ENCODE measurements at regions of chr3 and their contacts with region 1.

Region 1: DNA sequence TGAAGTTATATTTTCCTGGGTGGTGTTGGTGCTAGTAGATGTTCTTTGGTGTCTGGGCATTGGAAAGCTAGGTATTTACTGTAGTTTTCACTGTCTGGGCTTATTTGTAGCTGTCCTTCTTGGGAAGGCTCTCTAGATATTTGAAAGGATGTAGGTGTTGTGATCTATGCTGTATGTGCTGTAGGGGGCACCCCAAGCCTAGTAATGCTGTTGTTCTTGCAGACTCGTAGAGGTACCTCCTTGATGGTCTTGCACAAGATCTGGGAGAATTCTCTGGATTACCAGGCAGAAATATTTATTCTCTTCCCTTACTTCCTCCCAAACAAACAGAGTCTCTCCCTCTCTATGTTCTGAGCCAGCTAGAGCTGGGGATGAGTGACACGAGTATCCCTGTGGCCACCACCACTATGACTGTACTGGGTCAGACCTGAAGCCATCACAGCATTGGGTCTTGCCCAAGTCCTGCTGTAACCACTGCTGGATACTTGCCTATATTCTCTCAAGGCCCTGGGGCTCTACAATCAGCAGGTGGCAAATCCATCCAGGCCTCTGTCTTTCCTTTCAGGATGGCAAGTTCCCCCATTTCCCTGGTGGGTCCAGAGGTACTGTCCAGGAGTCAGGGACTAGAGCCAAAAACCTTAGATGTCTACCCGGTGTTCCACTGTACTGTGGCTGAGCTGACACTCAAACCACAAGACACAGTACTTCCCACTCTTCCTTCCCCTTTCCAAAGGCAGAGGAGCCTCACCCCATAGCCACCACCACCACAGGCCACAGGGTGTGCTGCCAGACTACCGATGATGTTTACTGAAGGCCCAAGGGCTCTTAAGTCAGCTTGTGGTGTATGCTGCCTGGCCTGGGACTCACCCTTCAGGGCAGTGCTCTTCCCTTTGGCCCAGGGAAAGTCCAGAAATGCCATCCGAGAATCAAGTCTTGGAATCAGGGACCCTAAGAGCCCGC is 195.2 kb upstream of the DPPA4 start:
- DNase-seq: peak; percentile 78
- ATAC-seq: peak; percentile 97
- H3K4me3 ChIP-seq: no peak overlapping the region
- H3K27ac ChIP-seq: no peak overlapping the region
- H3K4me1 ChIP-seq: peaks cover 4% of the 10 kb centered on the region; the same call in 1 of the 2 replicates
- H3K27me3 ChIP-seq: no peaks in the 10 kb centered on the region
- CTCF ChIP-seq: peak; percentile 80

Region 2: DNA sequence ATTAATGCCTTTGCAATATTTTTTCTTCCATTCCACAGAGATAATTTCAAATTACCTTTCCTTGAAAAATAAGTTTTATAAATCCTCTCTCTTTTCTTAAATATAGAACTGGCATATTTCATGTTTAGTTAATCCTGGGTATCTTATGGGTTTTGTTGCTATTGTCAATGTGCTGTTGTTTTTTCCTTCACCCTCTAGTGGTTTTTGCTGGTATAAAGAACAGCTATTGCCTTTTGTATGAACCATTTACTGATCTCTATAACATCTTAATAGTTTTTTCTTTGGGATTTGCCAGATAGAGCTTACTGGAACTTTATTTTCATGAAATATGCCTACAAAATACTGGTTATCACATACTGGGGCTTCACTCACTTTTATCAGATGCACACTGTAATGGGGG is 164.4 kb after region 1 on chr3:
- CTCF ChIA-PET with region 1: interaction called, 12 read pairs
- POLR2A ChIA-PET with region 1: no interaction called
- intact Hi-C with region 1: no loop called
- DNase-seq: peak; percentile 13
- ATAC-seq: no peak; the same call in 1 of the 2 replicates
- H3K4me3 ChIP-seq: no peak overlapping the region
- H3K27ac ChIP-seq: no peak overlapping the region
- H3K4me1 ChIP-seq: no peaks in the 10 kb centered on the region
- H3K27me3 ChIP-seq: no peaks in the 10 kb centered on the region
- CTCF ChIP-seq: peak; percentile 49

Region 3: DNA sequence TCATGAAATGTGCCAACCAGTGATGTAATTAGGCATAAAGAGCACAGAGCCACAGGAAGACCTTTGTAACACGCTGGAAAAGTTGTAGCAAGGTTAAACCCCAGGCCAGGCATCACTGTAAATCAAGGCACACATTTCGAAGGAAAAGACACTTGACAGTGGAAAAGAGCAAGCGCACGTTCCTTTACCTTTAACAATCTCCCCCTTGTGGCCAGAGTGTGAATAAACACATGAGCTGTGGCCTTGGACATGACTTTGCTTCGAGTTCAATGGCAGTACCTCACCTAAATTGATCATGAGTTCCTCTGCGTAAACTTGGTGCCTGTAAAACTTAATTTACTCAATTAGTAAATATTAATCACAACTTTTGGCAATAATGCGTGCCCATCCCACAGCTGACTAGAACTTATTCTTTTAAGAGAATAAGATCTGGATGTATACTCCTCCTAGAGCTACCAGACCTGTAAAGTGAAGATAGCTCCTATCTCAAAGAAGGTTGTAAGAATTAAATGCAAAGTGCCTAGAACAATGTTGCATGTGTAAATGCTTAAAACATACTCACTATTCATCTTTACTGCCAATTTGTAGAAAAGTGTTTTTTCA is 782.1 kb after region 1 on chr3:
- CTCF ChIA-PET with region 1: no interaction called
- POLR2A ChIA-PET with region 1: no interaction called
- intact Hi-C with region 1: loop called (anchors 2 kb)
- DNase-seq: peak; percentile 88
- ATAC-seq: peak; percentile 80
- H3K4me3 ChIP-seq: no peak overlapping the region
- H3K27ac ChIP-seq: no peak overlapping the region
- H3K4me1 ChIP-seq: peaks cover 10% of the 10 kb centered on the region
- H3K27me3 ChIP-seq: no peaks in the 10 kb centered on the region
- CTCF ChIP-seq: peak; percentile 90

Region 4: GRCh38 chr3:110375751-110376518 is 843.4 kb after region 1 on chr3:
- CTCF ChIA-PET with region 1: no interaction called
- POLR2A ChIA-PET with region 1: no interaction called
- intact Hi-C with region 1: no loop called
- DNase-seq: no peak
- ATAC-seq: no peak
- H3K4me3 ChIP-seq: no peak overlapping the region
- H3K27ac ChIP-seq: no peak overlapping the region
- H3K4me1 ChIP-seq: no peaks in the 10 kb centered on the region
- H3K27me3 ChIP-seq: no peaks in the 10 kb centered on the region
- CTCF ChIP-seq: no peak

Region 5: GRCh38 chr3:111080413-111080812 is 1547.9 kb after region 1 on chr3:
- CTCF ChIA-PET with region 1: no interaction called
- POLR2A ChIA-PET with region 1: no interaction called
- intact Hi-C with region 1: loop called (anchors 2 kb)
- DNase-seq: peak; percentile 70
- ATAC-seq: peak; percentile 61
- H3K4me3 ChIP-seq: no peak overlapping the region
- H3K27ac ChIP-seq: no peak overlapping the region
- H3K4me1 ChIP-seq: peaks cover 9% of the 10 kb centered on the region
- H3K27me3 ChIP-seq: no peaks in the 10 kb centered on the region
- CTCF ChIP-seq: peak; percentile 75

Region 6: DNA sequence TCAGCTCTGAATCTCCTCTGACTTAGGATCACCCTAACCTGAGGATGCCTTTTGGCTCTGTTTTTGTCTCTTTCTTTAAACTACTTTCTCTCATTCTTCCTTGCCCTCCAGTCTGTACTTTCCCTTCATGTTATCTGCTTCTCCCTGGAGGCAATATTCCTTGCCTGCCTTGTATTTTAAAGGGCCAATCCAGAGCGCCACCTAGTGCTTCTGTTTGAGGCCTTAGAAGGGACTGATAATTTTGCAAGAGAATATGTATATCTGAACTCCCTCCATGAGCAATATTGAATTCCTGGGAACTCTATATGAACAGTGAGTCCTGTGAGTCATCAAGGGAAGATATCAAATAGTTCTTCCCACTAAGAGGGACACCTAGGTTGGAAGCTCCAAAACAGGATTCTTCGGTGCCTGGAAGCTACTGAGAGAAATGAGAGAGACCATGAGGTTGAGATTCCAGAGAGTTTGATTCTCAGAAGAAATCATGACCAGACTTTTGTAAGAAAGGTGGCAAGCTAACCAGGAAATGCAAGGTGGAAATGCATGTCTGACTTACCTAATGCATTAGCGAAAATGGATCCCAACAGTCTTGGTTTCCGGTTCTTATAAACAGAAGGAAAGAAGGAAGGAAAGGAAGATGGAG is 1805.6 kb after region 1 on chr3:
- CTCF ChIA-PET with region 1: no interaction called
- POLR2A ChIA-PET with region 1: no interaction called
- intact Hi-C with region 1: loop called (anchors 2 kb)
- DNase-seq: peak; percentile 92
- ATAC-seq: peak; percentile 89
- H3K4me3 ChIP-seq: no peak overlapping the region
- H3K27ac ChIP-seq: no peak overlapping the region
- H3K4me1 ChIP-seq: peaks cover 19% of the 10 kb centered on the region
- H3K27me3 ChIP-seq: no peaks in the 10 kb centered on the region
- CTCF ChIP-seq: peak; percentile 98

Measured in PC-3 (cell line).